CD4-positive, alpha-beta T cell (primary cell): ENCODE measurements at regions of chr12 and their contacts with region 1.

Region 1: DNA sequence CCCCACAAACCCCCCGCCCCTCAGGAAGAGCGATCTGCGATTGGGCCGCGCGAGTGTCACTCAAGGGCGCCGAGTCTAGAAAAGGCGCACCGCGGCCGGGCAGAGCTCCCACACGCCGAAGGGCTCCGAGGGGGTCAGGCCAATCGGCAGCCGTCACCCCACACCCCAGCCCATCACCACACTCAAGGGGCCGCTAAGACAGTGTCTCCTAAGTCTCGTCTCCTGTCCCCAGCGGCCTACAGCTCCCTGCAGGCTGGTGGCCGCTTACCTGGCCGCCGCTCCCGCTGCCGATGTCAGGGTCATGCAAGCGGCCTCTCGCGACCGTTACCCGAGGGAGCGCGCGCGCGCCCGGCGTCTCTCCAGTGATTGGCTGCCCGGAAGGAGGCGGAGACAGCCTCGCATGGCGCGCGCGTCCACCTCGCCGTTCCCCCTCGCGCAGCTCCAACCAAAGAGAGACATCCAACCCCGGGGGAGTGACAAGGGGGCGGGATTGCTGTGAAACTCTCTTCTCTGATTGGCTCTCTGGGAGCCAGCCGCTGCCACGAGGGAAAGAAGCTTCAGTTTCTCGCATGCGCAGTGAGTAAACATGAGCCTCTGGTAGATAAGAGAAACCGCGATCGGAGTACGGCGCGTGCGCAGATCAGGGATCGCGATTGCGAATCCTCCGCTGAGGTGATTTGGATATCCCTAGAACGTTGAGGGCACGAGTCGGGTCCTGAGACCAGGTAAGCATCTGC is at the starts of genes MPHOSPH9 and MTRFR:
- DNase-seq: peak; percentile 97 to 100 (median 98)
- ATAC-seq: peak; percentile 87
- H3K4me3 ChIP-seq: peak within 1 kb of the TSS; percentile 97
- H3K4me3 Mint-ChIP-seq: peak within 1 kb of the TSS; percentile 95
- H3K27ac ChIP-seq: peak within 1 kb of the TSS; percentile 85 to 91
- H3K27ac Mint-ChIP-seq: peak within 1 kb of the TSS; percentile 97
- H3K4me1 ChIP-seq: peaks cover 67% of the 10 kb centered on the region
- H3K4me1 Mint-ChIP-seq: peaks cover 76% of the 10 kb centered on the region
- H3K27me3 ChIP-seq: no peaks in the 10 kb centered on the region
- H3K27me3 Mint-ChIP-seq: no peaks in the 10 kb centered on the region
- CTCF ChIP-seq: no peak
- total RNA-seq, gene MPHOSPH9: 80.9 to 84.5 TPM
- total RNA-seq, gene MTRFR: 43.2 to 44.5 TPM

Region 2: DNA sequence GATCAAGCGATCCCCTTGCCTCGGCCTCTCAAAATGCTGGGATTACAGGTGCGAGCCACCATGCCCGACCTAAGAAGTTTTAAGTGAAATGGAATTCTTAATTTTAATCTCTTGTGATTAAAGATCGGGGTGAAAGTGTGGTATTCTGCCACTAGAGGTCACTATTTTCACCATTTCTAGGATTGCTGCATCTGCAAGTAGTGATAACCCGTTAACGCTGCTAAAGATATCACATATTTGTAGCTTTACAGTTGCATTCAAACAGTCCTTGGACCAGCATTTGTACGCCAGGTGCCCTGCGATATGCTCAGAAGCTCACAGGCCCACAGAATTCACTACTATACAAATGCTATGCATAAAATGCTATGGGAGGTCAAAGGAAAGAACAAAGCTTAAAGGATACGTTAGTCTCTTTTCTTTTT is 439.3 kb before region 1 on chr12:
- CTCF ChIA-PET with region 1: interaction called, 5 read pairs
- POLR2A ChIA-PET with region 1: interaction called, 5 read pairs
- intact Hi-C with region 1: loop called in 1 of 2 experiments (anchors 5 kb)
- DNase-seq: peak in 5 of 14 experiments; percentile 18 to 76 (median 66)
- ATAC-seq: peak; percentile 87
- H3K4me3 ChIP-seq: no peak overlapping the region
- H3K4me3 Mint-ChIP-seq: no peak overlapping the region
- H3K27ac ChIP-seq: no peak overlapping the region
- H3K27ac Mint-ChIP-seq: no peak overlapping the region
- H3K4me1 ChIP-seq: peaks cover 7% of the 10 kb centered on the region
- H3K4me1 Mint-ChIP-seq: no peaks in the 10 kb centered on the region
- H3K27me3 ChIP-seq: no peaks in the 10 kb centered on the region
- H3K27me3 Mint-ChIP-seq: no peaks in the 10 kb centered on the region
- CTCF ChIP-seq: peak; percentile 88

Region 3: DNA sequence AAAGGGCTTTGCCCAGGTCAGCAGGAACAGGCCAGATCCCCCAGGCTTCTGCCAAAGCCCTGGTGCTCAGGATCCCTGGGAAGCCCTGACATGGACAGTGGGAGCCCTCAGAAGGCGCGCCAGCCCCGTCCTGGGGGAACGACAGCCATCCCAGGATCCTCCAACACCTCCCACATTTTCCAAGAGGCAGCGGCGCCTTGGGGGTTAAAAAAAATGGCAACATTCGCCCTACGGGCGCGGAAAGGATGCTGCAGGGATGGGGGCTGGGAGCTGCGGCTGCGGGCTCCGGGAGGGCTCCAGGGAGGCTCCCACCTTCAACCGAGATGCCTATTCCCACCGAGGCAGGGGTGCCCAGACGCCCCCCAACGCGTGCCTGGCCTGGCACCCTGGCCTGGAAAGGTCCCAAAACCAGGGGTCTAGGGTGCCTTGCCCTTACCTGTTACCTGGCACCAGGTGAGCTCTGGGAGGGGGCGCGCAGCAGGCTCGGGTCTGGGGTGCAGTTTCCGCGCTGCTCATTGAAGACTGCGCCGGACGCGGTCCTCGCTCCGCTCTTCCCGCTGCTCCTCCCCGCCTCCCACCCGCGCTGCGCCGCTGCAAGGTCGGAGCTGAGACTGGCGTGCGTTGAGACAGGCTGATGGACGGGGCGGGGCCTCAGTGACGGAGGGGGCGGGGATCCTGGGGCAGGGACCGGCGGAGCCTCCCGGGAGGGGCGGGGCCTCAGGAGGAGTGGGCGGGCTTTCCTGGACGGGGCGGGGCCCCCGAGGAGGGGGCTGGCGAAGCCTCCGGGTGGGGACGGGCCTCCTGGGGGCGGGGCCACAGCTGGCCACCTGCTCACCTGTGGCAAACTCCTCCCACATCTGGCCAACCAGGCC is 266.9 kb before region 1 on chr12 and contains the start of gene ABCB9:
- CTCF ChIA-PET with region 1: interaction called, 4 read pairs
- POLR2A ChIA-PET with region 1: interaction called, 17 read pairs
- intact Hi-C with region 1: no loop called
- DNase-seq: peak; percentile 91 to 99 (median 95)
- ATAC-seq: peak; percentile 97
- H3K4me3 ChIP-seq: peak within 1 kb of the TSS; percentile 78
- H3K4me3 Mint-ChIP-seq: peak within 1 kb of the TSS; percentile 81
- H3K27ac ChIP-seq: peak within 1 kb of the TSS; percentile 31 to 44
- H3K27ac Mint-ChIP-seq: peak within 1 kb of the TSS; percentile 14
- H3K4me1 ChIP-seq: peaks cover 28% of the 10 kb centered on the region
- H3K4me1 Mint-ChIP-seq: peaks cover 5% of the 10 kb centered on the region
- H3K27me3 ChIP-seq: no peaks in the 10 kb centered on the region
- H3K27me3 Mint-ChIP-seq: no peaks in the 10 kb centered on the region
- CTCF ChIP-seq: no peak
- total RNA-seq, gene ABCB9: 5.4 to 6.2 TPM

Region 4: DNA sequence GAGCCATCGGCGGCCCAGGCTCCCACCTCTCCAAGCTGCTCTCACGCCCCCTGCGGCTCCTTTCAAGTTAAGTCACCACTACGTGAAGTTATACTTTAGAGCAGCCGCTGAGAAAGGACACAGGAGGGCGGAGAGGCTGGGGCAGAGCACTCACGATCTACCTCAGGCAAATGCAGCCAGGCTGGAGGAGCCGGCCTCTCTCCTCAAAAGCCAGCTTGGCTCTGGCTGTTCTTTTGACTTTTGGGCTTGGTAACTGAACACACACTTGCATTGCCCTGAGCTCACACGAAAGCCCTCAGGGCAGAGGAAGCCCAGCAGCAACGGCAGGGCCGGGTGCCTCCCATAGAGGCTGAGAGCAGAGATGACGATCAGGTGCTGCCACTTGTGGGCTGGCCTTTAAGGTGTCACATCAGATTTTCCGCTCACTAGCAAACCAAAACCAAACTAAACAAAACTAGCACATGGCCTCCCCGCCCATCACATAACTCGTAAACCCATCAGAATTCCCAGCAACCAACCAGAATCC is 157.3 kb before region 1 on chr12:
- CTCF ChIA-PET with region 1: interaction called, 9 read pairs
- POLR2A ChIA-PET with region 1: interaction called, 39 read pairs
- intact Hi-C with region 1: loop called in 1 of 2 experiments (anchors 2 kb)
- DNase-seq: peak; percentile 49 to 90 (median 70)
- ATAC-seq: peak; percentile 83
- H3K4me3 ChIP-seq: peak overlapping the region; percentile 61
- H3K4me3 Mint-ChIP-seq: peak overlapping the region; percentile 81
- H3K27ac ChIP-seq: peak overlapping the region; percentile 66 to 81
- H3K27ac Mint-ChIP-seq: peak overlapping the region; percentile 90
- H3K4me1 ChIP-seq: peaks cover 67% of the 10 kb centered on the region
- H3K4me1 Mint-ChIP-seq: peaks cover 70% of the 10 kb centered on the region
- H3K27me3 ChIP-seq: no peaks in the 10 kb centered on the region
- H3K27me3 Mint-ChIP-seq: no peaks in the 10 kb centered on the region
- CTCF ChIP-seq: peak; percentile 59

Region 5: GRCh38 chr12:123200414-123200813 is 32.6 kb before region 1 on chr12:
- CTCF ChIA-PET with region 1: interaction called, 13 read pairs
- POLR2A ChIA-PET with region 1: interaction called, 16 read pairs
- intact Hi-C with region 1: loop called in 1 of 2 experiments (anchors 2 kb)
- DNase-seq: peak in 5 of 14 experiments; percentile 2 to 28 (median 7)
- ATAC-seq: peak; percentile 71
- H3K4me3 ChIP-seq: no peak overlapping the region
- H3K4me3 Mint-ChIP-seq: no peak overlapping the region
- H3K27ac ChIP-seq: no peak overlapping the region
- H3K27ac Mint-ChIP-seq: peak overlapping the region; percentile 81
- H3K4me1 ChIP-seq: peaks cover 4% of the 10 kb centered on the region
- H3K4me1 Mint-ChIP-seq: peaks cover 24% of the 10 kb centered on the region
- H3K27me3 ChIP-seq: no peaks in the 10 kb centered on the region
- H3K27me3 Mint-ChIP-seq: no peaks in the 10 kb centered on the region
- CTCF ChIP-seq: no peak

Region 6: GRCh38 chr12:123601602-123602489 is 368.9 kb after region 1 on chr12 and contains the start of gene DDX55:
- CTCF ChIA-PET with region 1: no interaction called
- POLR2A ChIA-PET with region 1: interaction called, 15 read pairs
- intact Hi-C with region 1: no loop called
- DNase-seq: peak; percentile 78 to 95 (median 84)
- ATAC-seq: peak; percentile 93
- H3K4me3 ChIP-seq: peak within 1 kb of the TSS; percentile 98
- H3K4me3 Mint-ChIP-seq: peak within 1 kb of the TSS; percentile 98
- H3K27ac ChIP-seq: peak within 1 kb of the TSS; percentile 85 to 89
- H3K27ac Mint-ChIP-seq: peak within 1 kb of the TSS; percentile 76
- H3K4me1 ChIP-seq: peaks cover 27% of the 10 kb centered on the region
- H3K4me1 Mint-ChIP-seq: peaks cover 33% of the 10 kb centered on the region
- H3K27me3 ChIP-seq: no peaks in the 10 kb centered on the region
- H3K27me3 Mint-ChIP-seq: no peaks in the 10 kb centered on the region
- CTCF ChIP-seq: peak; percentile 54
- total RNA-seq, gene DDX55: 33.3 to 37.1 TPM

Region 7: GRCh38 chr12:123670882-123671728 is 438.1 kb after region 1 on chr12 and contains the start of gene TCTN2:
- CTCF ChIA-PET with region 1: no interaction called
- POLR2A ChIA-PET with region 1: no interaction called
- intact Hi-C with region 1: no loop called
- DNase-seq: peak; percentile 89 to 95 (median 92)
- ATAC-seq: peak; percentile 100
- H3K4me3 ChIP-seq: peak within 1 kb of the TSS; percentile 94
- H3K4me3 Mint-ChIP-seq: peak within 1 kb of the TSS; percentile 89
- H3K27ac ChIP-seq: no peak within 1 kb of the TSS
- H3K27ac Mint-ChIP-seq: peak within 1 kb of the TSS; percentile 69
- H3K4me1 ChIP-seq: peaks cover 18% of the 10 kb centered on the region
- H3K4me1 Mint-ChIP-seq: peaks cover 15% of the 10 kb centered on the region
- H3K27me3 ChIP-seq: no peaks in the 10 kb centered on the region
- H3K27me3 Mint-ChIP-seq: no peaks in the 10 kb centered on the region
- CTCF ChIP-seq: no peak
- total RNA-seq, gene TCTN2: 3.2 to 3.5 TPM